ENCODE measurements at regions of chr2 and their contacts with region 1.

Region 1: GRCh38 chr2:62306751-62307468 is 111.0 kb downstream of the B3GNT2 start:
- DNase-seq: peak; percentile 89
- H3K4me3 ChIP-seq: no peak overlapping the region
- H3K27ac ChIP-seq: peak overlapping the region; percentile 82
- H3K4me1 ChIP-seq: peaks cover 47% of the 10 kb centered on the region
- H3K27me3 ChIP-seq: no peaks in the 10 kb centered on the region
- CTCF ChIP-seq: no peak
- POLR2A ChIP-seq: no peak

Region 2: DNA sequence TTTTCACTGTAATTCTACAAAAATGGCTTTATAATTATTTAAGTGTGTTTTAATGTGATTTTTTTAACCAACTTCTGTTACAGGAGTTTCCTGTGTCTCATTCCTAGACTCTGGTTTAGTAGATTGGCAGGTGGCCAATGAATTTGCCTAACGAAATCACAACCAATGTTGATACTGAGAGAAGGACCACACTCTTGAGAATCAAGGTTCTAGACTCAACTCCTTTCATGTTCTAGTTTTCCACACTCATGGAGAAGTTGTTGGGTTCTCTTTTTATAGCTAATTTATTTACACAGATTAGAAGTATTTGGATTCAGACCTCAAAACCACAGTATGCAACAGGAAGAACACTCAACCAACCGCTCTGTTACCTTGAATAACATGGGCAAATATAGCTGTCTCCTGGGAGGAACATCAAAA is 813.4 kb before region 1 on chr2:
- CTCF ChIA-PET with region 1: no interaction called
- POLR2A ChIA-PET with region 1: no interaction called
- dilution Hi-C with region 1: no loop called
- intact Hi-C with region 1: no loop called
- DNase-seq: peak; percentile 28
- H3K4me3 ChIP-seq: no peak overlapping the region
- H3K27ac ChIP-seq: no peak overlapping the region
- H3K4me1 ChIP-seq: peaks cover 3% of the 10 kb centered on the region
- H3K27me3 ChIP-seq: no peaks in the 10 kb centered on the region
- CTCF ChIP-seq: no peak
- POLR2A ChIP-seq: no peak

Region 3: GRCh38 chr2:61910603-61911002 is 396.3 kb before region 1 on chr2:
- CTCF ChIA-PET with region 1: no interaction called
- POLR2A ChIA-PET with region 1: no interaction called
- dilution Hi-C with region 1: no loop called
- intact Hi-C with region 1: loop called (anchors 10 kb)
- DNase-seq: no peak
- H3K4me3 ChIP-seq: no peak overlapping the region
- H3K27ac ChIP-seq: no peak overlapping the region
- H3K4me1 ChIP-seq: peaks cover 5% of the 10 kb centered on the region
- H3K27me3 ChIP-seq: no peaks in the 10 kb centered on the region
- CTCF ChIP-seq: no peak
- POLR2A ChIP-seq: no peak

Region 4: DNA sequence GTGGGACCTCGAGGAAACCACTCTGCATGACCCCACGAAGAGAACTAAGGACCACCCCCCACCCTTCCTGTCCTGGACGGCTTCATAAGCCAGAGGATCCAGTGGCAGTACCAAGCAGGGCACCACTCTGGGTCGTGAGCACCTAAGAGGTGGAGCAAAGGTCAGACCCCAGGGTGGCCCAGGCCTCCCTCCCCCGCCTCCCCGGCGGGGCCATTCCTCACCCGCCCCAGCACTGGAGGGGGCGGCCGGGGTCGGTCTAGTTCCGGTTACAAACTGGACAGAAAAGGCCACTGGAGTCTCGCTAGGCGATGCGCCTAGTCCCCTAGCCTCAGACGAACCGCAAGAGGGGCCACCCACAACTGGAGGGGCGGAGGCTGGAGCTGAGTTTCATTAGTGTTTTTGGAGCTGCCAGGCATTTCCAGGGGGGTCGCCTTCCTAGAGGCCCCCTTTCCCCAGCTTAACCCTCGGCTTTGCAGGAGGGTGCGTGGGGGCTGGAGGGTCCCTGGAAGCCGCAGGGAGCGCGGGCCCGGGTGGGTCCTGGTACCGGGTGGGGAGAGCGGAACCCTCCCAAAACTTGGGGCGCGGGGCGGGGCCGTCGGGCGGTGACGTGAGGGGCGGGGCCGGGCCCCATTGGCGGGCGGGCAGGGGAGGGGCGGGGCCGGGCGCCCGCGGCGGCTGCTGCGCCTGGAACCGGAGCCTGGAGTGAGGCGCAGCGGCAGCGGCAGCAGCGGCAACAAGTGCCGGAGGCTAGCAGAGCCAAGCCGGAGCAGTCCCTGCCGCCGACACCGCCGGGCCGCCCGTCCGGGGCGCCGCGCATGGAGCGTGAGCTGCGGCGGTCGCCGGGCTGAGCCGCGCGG is 111.3 kb before region 1 on chr2 and contains the start of gene B3GNT2:
- CTCF ChIA-PET with region 1: interaction called, 3 read pairs
- POLR2A ChIA-PET with region 1: interaction called, 3 read pairs
- dilution Hi-C with region 1: no loop called
- intact Hi-C with region 1: loop called (anchors 1 kb)
- DNase-seq: peak; percentile 70
- H3K4me3 ChIP-seq: peak within 1 kb of the TSS; percentile 82 to 98 (median 98)
- H3K27ac ChIP-seq: peak within 1 kb of the TSS; percentile 45
- H3K4me1 ChIP-seq: peaks cover 13% of the 10 kb centered on the region
- H3K27me3 ChIP-seq: peaks cover 0 to under 1% of the 10 kb centered on the region in 2 experiments
- CTCF ChIP-seq: no peak
- POLR2A ChIP-seq: peak; percentile 82
- total RNA-seq, gene B3GNT2: 17.8 and 21.2 TPM in 2 replicates

Region 5: GRCh38 chr2:62216616-62217015 is 90.3 kb before region 1 on chr2:
- CTCF ChIA-PET with region 1: no interaction called
- POLR2A ChIA-PET with region 1: no interaction called
- dilution Hi-C with region 1: no loop called
- intact Hi-C with region 1: loop called (anchors 5 kb)
- DNase-seq: peak; percentile 93
- H3K4me3 ChIP-seq: no peak overlapping the region
- H3K27ac ChIP-seq: peak overlapping the region; percentile 7
- H3K4me1 ChIP-seq: peaks cover 36% of the 10 kb centered on the region
- H3K27me3 ChIP-seq: no peaks in the 10 kb centered on the region
- CTCF ChIP-seq: no peak
- POLR2A ChIP-seq: no peak

Region 6: GRCh38 chr2:62277688-62278087 is 29.2 kb before region 1 on chr2:
- CTCF ChIA-PET with region 1: no interaction called
- POLR2A ChIA-PET with region 1: no interaction called
- dilution Hi-C with region 1: no loop called
- intact Hi-C with region 1: no loop called
- DNase-seq: no peak
- H3K4me3 ChIP-seq: no peak overlapping the region
- H3K27ac ChIP-seq: no peak overlapping the region
- H3K4me1 ChIP-seq: no peaks in the 10 kb centered on the region
- H3K27me3 ChIP-seq: peaks cover 0 to 2% of the 10 kb centered on the region in 2 experiments
- CTCF ChIP-seq: no peak
- POLR2A ChIP-seq: no peak

Region 7: GRCh38 chr2:62291528-62292137 is 15.3 kb before region 1 on chr2:
- CTCF ChIA-PET with region 1: no interaction called
- POLR2A ChIA-PET with region 1: no interaction called
- dilution Hi-C with region 1: no loop called
- intact Hi-C with region 1: no loop called
- DNase-seq: no peak
- H3K4me3 ChIP-seq: no peak overlapping the region
- H3K27ac ChIP-seq: no peak overlapping the region
- H3K4me1 ChIP-seq: no peaks in the 10 kb centered on the region
- H3K27me3 ChIP-seq: no peaks in the 10 kb centered on the region
- CTCF ChIP-seq: no peak
- POLR2A ChIP-seq: no peak

Region 8: GRCh38 chr2:62325398-62325797 is 18.5 kb after region 1 on chr2:
- CTCF ChIA-PET with region 1: no interaction called
- POLR2A ChIA-PET with region 1: interaction called, 3 read pairs
- dilution Hi-C with region 1: no loop called
- intact Hi-C with region 1: loop called (anchors 2 kb)
- DNase-seq: no peak
- H3K4me3 ChIP-seq: no peak overlapping the region
- H3K27ac ChIP-seq: no peak overlapping the region
- H3K4me1 ChIP-seq: no peaks in the 10 kb centered on the region
- H3K27me3 ChIP-seq: peaks cover 0 to 9% of the 10 kb centered on the region in 2 experiments
- CTCF ChIP-seq: no peak
- POLR2A ChIP-seq: no peak

Region 9: DNA sequence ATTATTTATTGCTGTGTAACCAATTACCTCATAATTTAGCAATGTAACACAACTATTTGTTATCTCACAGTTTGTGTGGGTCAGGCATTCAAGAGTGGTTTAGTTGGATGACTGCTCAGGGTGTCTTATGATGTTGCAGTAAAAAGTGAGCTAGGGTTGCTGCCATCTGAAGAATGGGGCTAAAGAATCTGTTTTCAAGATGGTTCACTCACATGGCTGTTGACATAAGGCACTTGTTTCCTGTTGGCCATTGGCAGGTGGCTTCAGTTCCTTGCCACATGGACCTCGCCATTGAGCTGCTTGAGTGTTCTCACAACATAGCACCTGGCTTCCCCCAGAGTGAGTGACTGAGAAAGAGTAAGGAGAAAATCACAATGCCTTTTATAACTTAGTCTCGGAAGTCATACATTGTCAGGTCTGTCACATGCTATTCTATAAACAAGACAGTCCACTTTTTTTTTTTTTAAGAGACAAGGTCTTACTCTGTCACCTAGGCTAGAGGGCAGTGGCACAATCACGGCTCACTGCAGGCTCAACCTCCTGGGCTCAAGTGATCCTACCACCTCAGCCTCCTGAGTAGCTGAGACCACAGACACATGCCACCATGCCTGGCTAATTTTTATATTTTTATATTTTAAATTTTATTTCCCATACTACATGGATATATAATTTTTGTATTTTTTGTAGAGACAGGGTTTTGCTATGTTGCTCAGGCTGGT is 76.0 kb after region 1 on chr2:
- CTCF ChIA-PET with region 1: interaction called, 4 read pairs
- POLR2A ChIA-PET with region 1: no interaction called
- dilution Hi-C with region 1: no loop called
- intact Hi-C with region 1: loop called (anchors 2 kb)
- DNase-seq: peak; percentile 70
- H3K4me3 ChIP-seq: no peak overlapping the region
- H3K27ac ChIP-seq: no peak overlapping the region
- H3K4me1 ChIP-seq: peaks cover 16% of the 10 kb centered on the region
- H3K27me3 ChIP-seq: no peaks in the 10 kb centered on the region
- CTCF ChIP-seq: no peak
- POLR2A ChIP-seq: no peak

Region 10: DNA sequence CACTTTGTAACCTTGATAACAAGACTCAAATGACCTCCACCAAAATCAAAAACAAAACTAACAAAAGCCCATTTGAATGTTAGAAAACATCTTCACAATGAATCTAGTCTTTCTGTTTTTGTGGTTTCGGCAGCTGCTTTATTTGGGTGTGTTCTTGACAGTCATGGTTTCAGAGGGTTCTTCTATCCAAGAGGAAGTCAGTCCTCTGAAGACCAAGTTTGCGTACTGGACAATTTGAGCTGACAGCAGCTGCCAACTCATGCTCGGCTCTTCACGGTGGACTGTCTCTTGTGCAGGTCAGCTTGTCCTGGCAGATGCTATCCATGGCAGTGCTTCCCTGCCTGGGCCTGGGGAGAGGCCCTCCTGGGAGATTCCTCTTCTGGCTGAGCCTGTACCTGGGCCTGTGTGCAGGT is 108.1 kb after region 1 on chr2:
- CTCF ChIA-PET with region 1: interaction called, 5 read pairs
- POLR2A ChIA-PET with region 1: no interaction called
- dilution Hi-C with region 1: no loop called
- intact Hi-C with region 1: loop called (anchors 1 kb)
- DNase-seq: no peak
- H3K4me3 ChIP-seq: no peak overlapping the region
- H3K27ac ChIP-seq: no peak overlapping the region
- H3K4me1 ChIP-seq: peaks cover 6% of the 10 kb centered on the region
- H3K27me3 ChIP-seq: no peaks in the 10 kb centered on the region
- CTCF ChIP-seq: no peak
- POLR2A ChIP-seq: no peak